ENCODE measurements at regions of chr6 and their contacts with region 1.

Region 1: DNA sequence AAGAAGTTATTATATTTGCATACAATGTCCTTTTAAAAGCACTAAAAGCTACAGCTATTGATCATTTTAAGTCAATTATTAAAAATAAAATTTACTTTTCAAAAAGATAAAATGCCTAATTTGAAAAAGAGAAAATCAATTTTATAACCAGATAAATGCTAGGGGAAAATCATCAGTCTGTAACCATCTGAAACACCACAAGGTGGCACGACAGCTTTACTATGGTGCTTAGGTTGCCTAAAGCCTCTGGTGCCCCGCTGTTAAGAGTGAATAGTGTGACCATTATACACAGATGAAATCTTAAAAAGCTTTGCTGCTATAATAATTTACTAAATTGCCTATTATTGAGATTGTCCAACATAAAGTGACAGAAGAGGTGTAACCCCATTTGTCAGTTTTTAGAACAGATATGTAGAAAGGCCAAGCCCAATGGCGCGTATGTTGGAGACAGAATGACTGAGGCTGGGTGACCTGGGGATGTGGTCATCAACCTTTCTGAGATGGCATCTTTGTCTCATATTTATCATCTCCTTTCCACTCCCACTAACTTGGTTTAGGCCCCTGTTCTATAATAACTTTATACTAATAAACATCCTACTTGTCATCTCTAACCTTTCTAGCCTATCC is 100.8 kb downstream of the MOXD1 start:
- DNase-seq: peak; percentile 41
- H3K4me3 ChIP-seq: no peak overlapping the region
- H3K27ac ChIP-seq: no peak overlapping the region
- H3K27me3 ChIP-seq: no peaks in the 10 kb centered on the region
- CTCF ChIP-seq: peak; percentile 71

Region 2: GRCh38 chr6:131923356-131923755 is 377.1 kb before region 1 on chr6:
- CTCF ChIA-PET with region 1: interaction called, 120 read pairs
- POLR2A ChIA-PET with region 1: interaction called, 3 read pairs
- DNase-seq: no peak
- H3K4me3 ChIP-seq: no peak overlapping the region
- H3K27ac ChIP-seq: no peak overlapping the region
- H3K27me3 ChIP-seq: no peaks in the 10 kb centered on the region
- CTCF ChIP-seq: peak; percentile 53

Region 3: DNA sequence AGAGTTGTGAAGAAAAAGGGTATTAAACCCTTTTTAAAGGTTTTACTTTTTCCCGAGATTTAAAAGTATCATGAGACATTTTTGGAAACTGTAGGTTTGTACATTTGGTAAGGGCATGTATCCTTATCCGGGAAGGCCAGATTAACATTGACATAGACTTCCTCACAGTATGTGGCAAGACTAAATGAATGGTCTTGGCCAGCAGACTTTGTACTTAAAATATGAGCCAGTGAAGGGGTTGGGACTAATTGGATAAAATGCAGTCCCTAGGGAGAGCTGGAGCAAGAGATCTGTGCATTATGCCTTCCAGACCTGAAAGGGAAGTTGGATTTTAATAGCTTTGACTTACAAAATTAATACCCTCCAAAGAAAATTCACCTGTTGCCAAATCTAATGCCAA is 288.9 kb before region 1 on chr6:
- CTCF ChIA-PET with region 1: no interaction called
- POLR2A ChIA-PET with region 1: no interaction called
- DNase-seq: no peak
- H3K4me3 ChIP-seq: no peak overlapping the region
- H3K27ac ChIP-seq: no peak overlapping the region
- H3K27me3 ChIP-seq: no peaks in the 10 kb centered on the region
- CTCF ChIP-seq: no peak

Region 4: GRCh38 chr6:132179955-132180354 is 120.5 kb before region 1 on chr6:
- CTCF ChIA-PET with region 1: no interaction called
- POLR2A ChIA-PET with region 1: no interaction called
- DNase-seq: no peak
- H3K4me3 ChIP-seq: no peak overlapping the region
- H3K27ac ChIP-seq: no peak overlapping the region
- H3K27me3 ChIP-seq: no peaks in the 10 kb centered on the region
- CTCF ChIP-seq: no peak

Region 5: GRCh38 chr6:132320007-132320406 is 19.6 kb after region 1 on chr6:
- CTCF ChIA-PET with region 1: interaction called, 16 read pairs
- POLR2A ChIA-PET with region 1: no interaction called
- DNase-seq: peak; percentile 24
- H3K4me3 ChIP-seq: no peak overlapping the region
- H3K27ac ChIP-seq: no peak overlapping the region
- H3K27me3 ChIP-seq: no peaks in the 10 kb centered on the region
- CTCF ChIP-seq: no peak

Region 6: GRCh38 chr6:132465530-132466485 is 165.4 kb after region 1 on chr6:
- CTCF ChIA-PET with region 1: interaction called, 61 read pairs
- POLR2A ChIA-PET with region 1: no interaction called
- DNase-seq: no peak
- H3K4me3 ChIP-seq: no peak overlapping the region
- H3K27ac ChIP-seq: no peak overlapping the region
- H3K27me3 ChIP-seq: no peaks in the 10 kb centered on the region
- CTCF ChIP-seq: no peak

Region 7: DNA sequence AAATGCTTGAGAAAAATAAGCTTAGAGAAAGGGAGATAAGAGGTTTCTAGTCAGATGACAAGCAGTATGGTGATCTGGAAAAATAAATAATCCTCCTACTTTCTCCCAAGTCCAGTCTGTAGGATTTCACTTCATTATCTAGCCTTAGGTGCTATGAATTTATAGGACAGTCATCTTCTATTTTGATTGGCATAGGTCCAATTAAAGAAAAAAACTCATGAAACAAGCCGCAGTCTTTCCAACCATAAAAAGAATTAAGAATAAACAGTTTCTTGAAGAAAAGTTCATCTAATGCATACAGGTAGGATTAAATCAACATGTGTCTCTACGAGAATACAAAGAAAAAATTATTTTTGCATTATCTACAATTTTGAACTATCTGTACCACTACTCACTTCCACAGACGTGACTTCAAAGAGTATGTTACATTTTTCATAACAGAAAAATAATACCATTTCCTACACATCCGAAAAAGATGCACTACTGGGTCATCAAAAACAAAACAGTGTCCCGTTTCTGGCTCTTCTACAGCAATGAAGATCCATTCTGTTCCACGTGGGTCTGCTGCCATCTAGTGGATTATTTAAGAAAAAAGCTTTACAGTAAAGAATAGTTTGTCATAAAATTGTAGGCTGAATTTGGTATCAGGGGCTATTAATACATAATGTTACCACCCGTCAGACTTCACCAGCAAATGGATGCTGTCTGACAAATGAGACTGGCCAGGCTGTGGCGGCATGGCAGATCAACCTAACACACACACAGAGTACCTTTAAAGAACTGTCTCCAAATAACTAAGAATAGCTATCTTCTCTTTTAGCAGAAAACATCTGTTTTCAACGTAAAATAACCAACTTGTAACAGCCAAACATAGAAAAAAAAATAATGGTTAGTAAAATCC is 183.6 kb after region 1 on chr6:
- CTCF ChIA-PET with region 1: interaction called, 281 read pairs
- POLR2A ChIA-PET with region 1: no interaction called
- DNase-seq: peak; percentile 37
- H3K4me3 ChIP-seq: no peak overlapping the region
- H3K27ac ChIP-seq: no peak overlapping the region
- H3K27me3 ChIP-seq: no peaks in the 10 kb centered on the region
- CTCF ChIP-seq: peak; percentile 69

Region 8: DNA sequence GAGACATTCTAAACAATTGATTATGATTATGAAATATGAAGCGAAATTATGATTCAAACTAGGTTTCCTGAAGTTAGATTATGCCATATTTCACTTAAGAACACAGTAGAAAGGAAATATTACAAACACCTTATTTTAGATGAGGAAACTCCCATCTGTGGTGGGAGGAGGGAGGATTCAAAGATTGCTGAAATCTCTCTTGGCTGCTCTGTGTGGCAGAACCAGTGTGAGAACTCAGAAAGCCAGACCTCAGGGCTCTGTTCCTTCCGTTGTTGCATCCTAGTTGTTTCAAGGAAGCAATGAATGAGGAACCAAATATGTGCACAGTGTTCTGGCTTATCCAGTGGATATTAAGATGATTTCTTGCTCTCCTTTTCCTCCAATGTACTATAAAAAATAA is 287.0 kb after region 1 on chr6:
- CTCF ChIA-PET with region 1: no interaction called
- POLR2A ChIA-PET with region 1: no interaction called
- DNase-seq: no peak
- H3K4me3 ChIP-seq: no peak overlapping the region
- H3K27ac ChIP-seq: no peak overlapping the region
- H3K27me3 ChIP-seq: peaks cover 16% of the 10 kb centered on the region
- CTCF ChIP-seq: no peak

Measured in AG04450 (cell line).